Activated naive CD4-positive, alpha-beta T cell treated with anti-CD3 and anti-CD28 coated beads for 36 hours (primary cell): ENCODE measurements at regions of chr1 and their contacts with region 1.

Region 1: DNA sequence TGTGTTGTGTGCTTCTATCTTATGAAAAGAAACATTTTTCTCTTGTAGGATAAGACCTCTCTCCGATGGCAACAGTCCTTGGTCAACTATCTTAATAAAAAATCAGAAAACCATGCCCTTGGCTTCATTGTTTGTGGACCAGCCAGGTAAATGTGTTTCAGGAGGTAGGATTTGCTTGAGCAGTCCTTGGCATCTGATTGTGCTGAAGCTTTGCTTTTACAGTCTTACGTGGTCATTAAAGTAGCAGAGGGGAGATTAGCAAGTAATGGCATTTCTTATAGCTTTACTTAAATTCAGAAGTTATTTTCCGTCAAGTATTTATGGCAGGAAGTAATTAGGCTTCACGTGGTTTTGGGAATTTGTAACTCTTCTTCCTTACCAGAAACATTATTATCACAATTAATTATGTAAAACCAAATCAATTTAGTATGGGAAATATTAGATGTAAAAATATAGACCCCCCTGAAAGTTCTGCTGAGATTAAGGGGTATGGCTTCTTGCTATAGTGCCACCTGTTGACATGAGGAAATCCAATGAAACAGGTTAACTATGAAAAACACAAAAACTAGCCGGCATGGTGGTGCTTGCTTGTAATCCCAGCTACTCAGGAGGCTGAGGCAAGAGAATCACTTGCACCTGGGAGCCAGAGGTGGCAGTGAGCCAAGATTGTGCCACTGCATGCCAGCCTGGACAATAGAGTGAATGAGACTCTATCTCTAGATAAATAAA is 49.0 kb downstream of the MAP3K21 start:
- DNase-seq: no peak
- H3K4me3 Mint-ChIP-seq: no peak overlapping the region
- H3K27ac Mint-ChIP-seq: no peak overlapping the region
- H3K4me1 Mint-ChIP-seq: no peaks in the 10 kb centered on the region
- H3K27me3 Mint-ChIP-seq: no peaks in the 10 kb centered on the region

Region 2: DNA sequence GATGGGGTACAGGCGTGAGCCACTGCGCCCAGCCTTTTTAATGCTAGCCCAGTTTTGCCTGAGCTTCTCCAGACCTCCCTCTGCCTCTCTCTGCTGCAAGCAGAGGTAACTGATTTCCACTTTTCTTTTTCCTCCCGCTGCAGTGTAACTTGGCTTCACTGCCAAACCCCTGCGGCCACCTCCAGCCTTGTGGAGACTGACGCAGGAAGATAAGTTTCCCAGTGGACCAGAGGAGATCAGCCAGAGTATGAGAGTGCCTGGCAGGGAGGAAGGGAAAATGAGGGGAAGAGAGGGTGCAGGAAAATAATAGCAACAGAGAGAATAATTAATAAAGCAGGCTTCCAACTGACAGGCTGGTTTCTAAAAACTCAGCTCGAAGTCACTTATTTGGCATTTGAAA is 224.7 kb before region 1 on chr1:
- CTCF ChIA-PET with region 1: no interaction called
- intact Hi-C with region 1: no loop called
- DNase-seq: no peak
- H3K4me3 Mint-ChIP-seq: no peak overlapping the region
- H3K27ac Mint-ChIP-seq: no peak overlapping the region
- H3K4me1 Mint-ChIP-seq: no peaks in the 10 kb centered on the region
- H3K27me3 Mint-ChIP-seq: no peaks in the 10 kb centered on the region

Region 3: GRCh38 chr1:233364695-233365539 is 11.6 kb before region 1 on chr1:
- CTCF ChIA-PET with region 1: interaction called, 13 read pairs
- intact Hi-C with region 1: no loop called
- DNase-seq: no peak
- H3K4me3 Mint-ChIP-seq: no peak overlapping the region
- H3K27ac Mint-ChIP-seq: no peak overlapping the region
- H3K4me1 Mint-ChIP-seq: no peaks in the 10 kb centered on the region
- H3K27me3 Mint-ChIP-seq: peaks cover 5% of the 10 kb centered on the region

Region 4: DNA sequence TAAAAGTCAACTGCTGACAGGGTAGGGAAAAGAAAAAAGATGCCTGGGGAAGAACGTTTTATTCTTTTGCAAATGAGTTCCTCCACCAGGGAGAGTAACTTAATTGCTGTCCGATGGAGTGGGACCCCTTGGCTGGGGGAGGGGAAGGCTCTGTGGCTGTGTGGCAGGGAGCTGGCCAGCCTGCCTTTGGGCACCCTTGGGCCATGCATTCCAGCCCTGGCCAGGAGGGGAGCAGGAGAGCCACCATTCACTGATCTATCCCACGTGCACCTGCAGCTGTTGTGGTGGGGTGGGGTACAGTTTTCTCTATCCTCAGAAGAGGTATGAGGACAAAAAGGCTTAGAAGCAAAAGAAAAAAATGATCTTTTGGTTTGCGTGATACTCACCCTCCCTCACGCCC is 354.3 kb after region 1 on chr1:
- CTCF ChIA-PET with region 1: no interaction called
- intact Hi-C with region 1: no loop called
- DNase-seq: no peak
- H3K4me3 Mint-ChIP-seq: no peak overlapping the region
- H3K27ac Mint-ChIP-seq: no peak overlapping the region
- H3K4me1 Mint-ChIP-seq: no peaks in the 10 kb centered on the region
- H3K27me3 Mint-ChIP-seq: no peaks in the 10 kb centered on the region

Region 5: DNA sequence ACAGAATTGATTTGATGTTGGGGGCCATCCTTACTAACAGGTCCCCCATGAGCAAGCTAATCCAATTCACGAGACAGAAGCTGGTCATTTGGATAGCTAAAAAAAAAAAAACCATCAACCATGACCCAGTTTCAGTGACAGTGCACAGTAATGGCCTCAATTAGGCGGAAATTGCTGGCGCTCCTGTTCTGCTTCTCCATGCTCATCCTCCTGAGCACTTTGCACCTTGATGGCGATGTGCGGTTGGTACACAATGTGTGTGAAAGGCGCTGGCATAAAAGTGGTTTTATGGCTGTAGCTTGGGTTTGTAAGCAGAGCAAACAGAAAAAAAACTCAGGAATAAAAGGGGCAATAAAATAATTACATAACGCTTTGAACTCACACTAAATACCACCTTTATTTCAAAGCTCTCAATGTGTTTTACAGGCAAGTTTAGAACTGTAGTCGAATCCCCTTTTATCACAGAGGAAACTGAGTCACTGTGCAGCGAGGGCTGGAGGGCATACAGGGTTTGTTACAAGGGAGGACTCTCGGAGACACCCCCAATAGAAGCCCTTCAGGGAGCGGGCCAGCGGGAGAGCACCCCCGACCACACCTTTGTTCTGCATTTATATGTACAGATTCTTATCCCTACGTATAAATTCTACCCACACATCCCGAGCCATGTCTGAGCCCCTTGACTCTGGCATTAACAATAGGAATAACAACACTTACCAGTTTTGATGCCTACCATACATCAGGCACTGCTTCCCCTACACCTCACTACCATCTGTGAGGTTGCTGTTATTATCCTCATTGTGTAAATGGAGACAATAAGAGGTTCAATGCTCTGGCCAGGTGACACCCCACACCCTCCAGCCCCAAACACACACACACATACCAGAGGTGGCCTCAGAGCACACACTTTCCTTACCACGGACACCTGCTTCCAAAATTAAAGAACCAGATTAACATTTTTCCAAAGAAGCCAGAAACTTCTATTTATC is 1446.9 kb after region 1 on chr1:
- CTCF ChIA-PET with region 1: no interaction called
- intact Hi-C with region 1: no loop called
- DNase-seq: no peak
- H3K4me3 Mint-ChIP-seq: no peak overlapping the region
- H3K27ac Mint-ChIP-seq: no peak overlapping the region
- H3K4me1 Mint-ChIP-seq: peaks cover 2% of the 10 kb centered on the region
- H3K27me3 Mint-ChIP-seq: no peaks in the 10 kb centered on the region